ENCODE measurements at regions of chr12 and their contacts with region 1.

Region 1: DNA sequence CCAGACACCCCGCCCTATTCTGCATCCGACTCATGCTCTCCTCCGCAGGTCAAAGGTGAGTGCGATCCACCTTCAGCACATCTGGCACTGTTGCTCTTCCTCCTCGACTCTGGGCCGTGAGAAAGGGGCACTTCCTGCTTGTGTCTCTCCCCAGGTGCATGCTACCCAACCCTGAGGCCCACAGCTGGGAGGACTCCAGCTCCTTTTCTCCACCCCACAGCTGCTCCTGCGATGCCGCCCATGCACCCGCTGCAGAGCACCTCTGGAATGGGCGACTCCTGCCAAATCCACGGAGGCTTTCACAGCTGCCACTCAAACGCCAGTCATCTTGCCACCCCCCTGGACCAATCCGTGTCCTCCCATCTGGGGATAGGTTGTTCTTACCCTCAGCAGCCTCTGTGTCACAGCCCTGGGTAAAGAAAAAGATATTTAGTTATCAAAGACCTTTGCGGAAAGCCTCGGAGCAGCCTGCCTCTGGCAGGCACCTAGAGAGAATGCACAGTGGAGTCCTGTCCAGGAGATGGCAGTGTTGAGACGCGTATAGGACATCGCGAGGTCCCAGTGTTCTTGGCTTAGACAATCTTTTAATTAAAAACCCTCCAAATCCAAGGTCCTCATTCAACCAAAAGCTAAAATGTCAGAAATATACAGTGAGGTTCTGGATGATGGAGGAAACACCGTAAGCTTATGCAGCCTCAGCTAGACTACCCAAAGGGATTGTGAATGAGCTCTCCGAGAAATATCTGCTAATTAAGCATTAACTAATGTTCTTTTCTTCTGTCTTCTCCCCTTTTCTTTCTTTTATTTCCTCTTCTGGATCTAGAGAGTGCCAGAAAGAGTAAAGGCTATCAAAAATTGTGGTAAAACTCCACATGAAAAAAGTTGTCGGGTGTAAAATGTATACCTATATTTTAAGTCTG is 54.3 kb downstream of the MYRFL start:
- DNase-seq: peak; percentile 66
- H3K4me3 ChIP-seq: no peak overlapping the region
- CTCF ChIP-seq: peak; percentile 87

Region 2: DNA sequence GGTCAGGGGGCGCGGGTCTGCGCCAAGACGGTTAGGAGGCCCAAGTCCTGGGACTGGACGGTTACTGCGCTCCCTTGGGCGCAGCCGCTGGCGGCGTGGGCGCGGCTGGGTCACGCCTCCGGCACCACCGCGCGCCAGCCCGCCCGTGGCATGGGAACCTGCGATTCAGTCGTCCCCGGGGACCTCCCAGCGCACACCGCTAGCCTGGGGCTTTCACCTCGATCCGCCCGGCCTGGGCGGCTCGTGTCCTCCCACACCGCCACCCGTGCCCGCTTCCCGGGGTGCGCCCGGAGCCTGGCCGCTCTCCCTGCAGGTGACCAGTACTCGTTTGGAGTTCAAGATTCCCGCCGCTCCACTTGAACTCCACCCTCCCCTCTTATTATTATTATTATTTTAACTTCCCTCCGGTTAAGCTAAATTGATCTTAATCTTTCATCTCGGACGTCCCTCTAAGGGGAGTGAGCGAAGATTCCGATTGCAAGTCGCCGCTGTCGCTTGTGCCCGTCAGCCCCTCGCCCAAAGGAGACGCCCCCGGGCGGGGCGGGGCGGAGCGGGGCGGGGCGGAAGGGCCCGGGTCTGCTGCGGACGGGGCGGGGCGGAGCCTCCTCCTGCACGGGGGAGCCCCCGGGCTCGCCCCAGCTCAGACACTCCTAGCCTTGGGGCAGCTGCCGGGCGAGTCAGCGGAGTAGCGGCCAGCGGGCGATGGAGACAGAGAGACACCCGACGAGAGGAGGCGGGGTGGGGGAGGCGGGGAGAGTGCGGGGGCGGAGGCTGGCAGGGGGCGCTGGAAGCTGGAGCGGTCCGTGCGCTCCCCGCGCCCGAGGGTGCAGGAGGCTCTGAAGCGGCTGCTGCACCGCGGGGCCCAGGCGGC is 486.6 kb after region 1 on chr12 and contains the start of gene KCNMB4:
- in situ Hi-C with region 1: loop called (anchors 25 kb)
- DNase-seq: no peak
- H3K4me3 ChIP-seq: peak within 1 kb of the TSS; percentile 64
- CTCF ChIP-seq: no peak

Measured in astrocyte of the cerebellum (primary cell).